Activated CD4-positive, alpha-beta memory T cell treated with anti-CD3 and anti-CD28 coated beads for 36 hours (primary cell): ENCODE measurements at regions of chr12 and their contacts with region 1.

Region 1: DNA sequence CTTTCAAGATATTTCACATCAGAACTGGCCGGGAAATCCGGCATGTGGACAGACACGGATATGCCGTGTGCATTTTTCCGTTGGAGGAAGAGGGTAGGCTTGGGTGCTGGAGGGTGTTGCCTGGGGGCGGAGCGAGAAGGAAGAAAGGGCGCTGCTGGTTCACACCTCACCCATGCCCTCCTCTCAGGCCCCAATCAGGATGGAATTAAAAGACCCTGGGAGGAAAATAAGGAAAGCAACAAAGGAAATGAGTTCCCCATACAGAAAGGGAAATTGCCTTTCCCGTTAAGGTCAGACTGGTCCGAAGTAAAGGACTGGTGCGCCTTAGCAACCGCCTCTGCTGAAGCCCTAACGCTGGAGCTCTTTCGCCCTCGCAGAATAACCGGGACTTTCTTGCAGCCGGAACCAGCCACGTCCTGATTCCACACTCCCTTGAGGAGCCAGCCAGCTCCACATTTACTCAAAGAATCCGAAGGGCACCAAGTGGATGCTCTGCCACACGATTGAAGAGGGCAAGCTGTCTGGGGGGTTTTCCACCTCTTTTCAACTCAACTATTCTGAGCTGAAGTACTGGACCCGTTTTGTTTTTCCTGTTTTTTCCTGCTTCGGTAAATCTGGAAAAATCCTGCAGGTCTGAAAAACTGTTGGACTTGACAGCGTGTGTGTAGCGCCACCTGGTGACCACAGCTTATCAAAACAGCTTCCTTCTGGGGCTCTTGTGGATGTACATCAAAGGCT is 37.7 kb upstream of the BCL2L14 start:
- DNase-seq: peak; percentile 81
- H3K4me3 Mint-ChIP-seq: peak overlapping the region; percentile 72
- H3K27ac Mint-ChIP-seq: peak overlapping the region; percentile 88
- H3K4me1 Mint-ChIP-seq: peaks cover 69% of the 10 kb centered on the region
- H3K27me3 Mint-ChIP-seq: peaks cover 1% of the 10 kb centered on the region

Region 2: GRCh38 chr12:11621797-11622423 is 411.1 kb before region 1 on chr12:
- CTCF ChIA-PET with region 1: interaction called, 9 read pairs
- POLR2A ChIA-PET with region 1: no interaction called
- intact Hi-C with region 1: loop called (anchors 1 kb)
- DNase-seq: peak; percentile 44
- H3K4me3 Mint-ChIP-seq: no peak overlapping the region
- H3K27ac Mint-ChIP-seq: no peak overlapping the region
- H3K4me1 Mint-ChIP-seq: peaks cover 3% of the 10 kb centered on the region
- H3K27me3 Mint-ChIP-seq: no peaks in the 10 kb centered on the region

Region 3: GRCh38 chr12:11765817-11766794 is 266.9 kb before region 1 on chr12:
- CTCF ChIA-PET with region 1: interaction called, 14 read pairs
- POLR2A ChIA-PET with region 1: interaction called, 5 read pairs
- intact Hi-C with region 1: loop called (anchors 2 kb)
- DNase-seq: peak; percentile 88
- H3K4me3 Mint-ChIP-seq: peak overlapping the region; percentile 28
- H3K27ac Mint-ChIP-seq: peak overlapping the region; percentile 84
- H3K4me1 Mint-ChIP-seq: peaks cover 99% of the 10 kb centered on the region
- H3K27me3 Mint-ChIP-seq: no peaks in the 10 kb centered on the region

Region 4: GRCh38 chr12:11836282-11837151 is 196.5 kb before region 1 on chr12:
- CTCF ChIA-PET with region 1: interaction called, 5 read pairs
- POLR2A ChIA-PET with region 1: interaction called, 4 read pairs
- intact Hi-C with region 1: loop called (anchors 1 kb)
- DNase-seq: peak; percentile 88
- H3K4me3 Mint-ChIP-seq: peak overlapping the region; percentile 54
- H3K27ac Mint-ChIP-seq: peak overlapping the region; percentile 98
- H3K4me1 Mint-ChIP-seq: peaks cover 85% of the 10 kb centered on the region
- H3K27me3 Mint-ChIP-seq: no peaks in the 10 kb centered on the region

Region 5: DNA sequence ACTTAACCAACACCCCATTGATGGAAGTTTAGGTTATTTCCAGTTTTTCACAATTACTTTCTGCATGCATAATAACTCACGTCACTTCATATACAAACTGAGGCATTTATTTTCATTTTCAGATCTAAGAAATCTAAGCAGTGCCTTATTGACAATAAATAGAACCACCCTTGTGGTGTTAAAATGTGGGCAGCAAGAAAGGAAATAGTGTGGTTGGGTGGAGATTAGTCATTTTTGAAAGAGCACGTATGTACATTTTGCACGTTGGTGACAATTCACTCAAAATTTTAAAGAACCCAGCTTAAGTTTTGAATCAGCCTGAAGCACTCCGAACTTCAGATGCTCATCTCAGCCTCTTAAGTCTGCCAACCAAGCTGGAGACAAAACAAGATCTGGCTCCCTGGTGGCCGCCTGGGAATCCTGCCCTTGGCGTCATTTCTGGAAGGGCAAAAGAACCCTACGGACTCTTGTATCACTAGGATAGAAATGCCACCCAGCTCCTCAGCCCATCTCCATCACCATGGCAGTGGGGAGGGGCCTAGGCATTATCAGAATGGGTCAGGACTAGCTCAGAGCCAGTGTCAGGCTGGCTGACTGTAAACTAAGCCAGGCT is 51.8 kb before region 1 on chr12:
- CTCF ChIA-PET with region 1: interaction called, 12 read pairs
- POLR2A ChIA-PET with region 1: interaction called, 12 read pairs
- intact Hi-C with region 1: loop called (anchors 2 kb)
- DNase-seq: peak; percentile 78
- H3K4me3 Mint-ChIP-seq: peak overlapping the region; percentile 36
- H3K27ac Mint-ChIP-seq: peak overlapping the region; percentile 99
- H3K4me1 Mint-ChIP-seq: peaks cover 68% of the 10 kb centered on the region
- H3K27me3 Mint-ChIP-seq: no peaks in the 10 kb centered on the region

Region 6: GRCh38 chr12:12091977-12092663 is 59.1 kb after region 1 on chr12:
- CTCF ChIA-PET with region 1: no interaction called
- POLR2A ChIA-PET with region 1: no interaction called
- intact Hi-C with region 1: no loop called
- DNase-seq: no peak
- H3K4me3 Mint-ChIP-seq: no peak overlapping the region
- H3K27ac Mint-ChIP-seq: no peak overlapping the region
- H3K4me1 Mint-ChIP-seq: no peaks in the 10 kb centered on the region
- H3K27me3 Mint-ChIP-seq: peaks cover 1% of the 10 kb centered on the region